ENCODE measurements at regions of chr5 and their contacts with region 1.

Region 1: DNA sequence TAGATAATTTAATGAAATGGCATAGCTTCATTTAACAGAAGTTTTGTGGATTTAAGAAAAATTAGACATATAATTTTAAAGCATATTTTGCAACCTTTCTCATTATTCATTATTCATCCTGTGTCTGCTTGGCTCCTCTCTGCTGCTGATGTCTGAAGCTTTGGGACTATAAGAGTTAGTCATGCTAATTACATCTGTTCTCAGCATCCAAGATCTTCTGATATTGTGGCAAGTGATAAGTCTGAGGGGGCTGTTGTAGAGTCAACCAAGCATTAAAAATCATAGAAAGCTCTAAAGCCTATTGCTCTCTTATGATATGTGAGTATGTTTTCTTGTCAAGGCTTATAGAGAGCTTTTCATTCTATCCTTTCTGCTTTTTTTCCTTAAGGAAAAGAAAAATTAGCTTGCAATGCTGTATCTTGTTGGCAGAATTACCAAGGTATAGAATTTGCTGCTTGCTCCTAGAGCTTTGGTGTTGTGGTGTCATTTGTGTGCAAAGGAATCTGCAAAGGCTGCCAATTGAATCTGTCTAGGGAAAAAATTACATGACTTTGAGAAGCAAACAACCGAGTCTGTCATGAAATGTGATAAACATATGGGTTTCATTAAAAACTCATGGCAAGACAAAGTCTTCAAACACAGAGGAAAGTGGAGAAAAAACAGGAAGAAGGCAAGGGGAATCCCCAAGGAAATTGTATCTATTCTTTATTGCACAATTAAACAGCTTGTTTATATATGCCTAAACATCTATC is 156.1 kb upstream of the DAB2 start:
- DNase-seq: peak in 1 of 42 donors; percentile 15

Region 2: GRCh38 chr5:40694433-40694832 is 1113.6 kb after region 1 on chr5:
- intact Hi-C with region 1: loop called (anchors 5 kb)
- DNase-seq: no peak

Region 3: DNA sequence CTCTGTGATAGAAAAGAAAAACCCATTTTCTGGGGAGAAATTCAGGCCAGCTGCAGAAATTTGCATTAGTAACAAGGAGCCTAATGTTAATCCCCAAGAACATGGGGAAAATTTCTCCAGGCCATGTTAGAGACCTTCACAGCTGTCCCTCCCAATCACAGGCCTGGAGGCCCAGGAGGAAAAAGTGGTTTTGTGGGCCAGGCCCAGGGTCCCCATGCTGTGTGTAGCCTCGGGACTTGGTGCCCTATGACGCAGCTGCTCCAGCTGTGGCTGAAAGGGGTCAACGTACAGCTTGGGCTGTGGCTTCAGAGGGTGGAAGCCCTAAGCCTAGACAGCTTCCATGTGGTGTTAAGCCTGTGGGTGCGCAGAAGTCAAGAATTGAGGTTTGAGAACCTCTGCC is 1301.4 kb after region 1 on chr5:
- intact Hi-C with region 1: loop called (anchors 10 kb)
- DNase-seq: no peak